BJ (cell line): ENCODE measurements at regions of chr2 and their contacts with region 1.

Region 1: GRCh38 chr2:216139884-216140283 is 30.7 kb downstream of the XRCC5 start:
- DNase-seq: no peak
- H3K4me3 ChIP-seq: no peak overlapping the region
- H3K27me3 ChIP-seq: no peaks in the 10 kb centered on the region
- CTCF ChIP-seq: peak; percentile 24; the same call in 1 of the 2 replicates

Region 2: DNA sequence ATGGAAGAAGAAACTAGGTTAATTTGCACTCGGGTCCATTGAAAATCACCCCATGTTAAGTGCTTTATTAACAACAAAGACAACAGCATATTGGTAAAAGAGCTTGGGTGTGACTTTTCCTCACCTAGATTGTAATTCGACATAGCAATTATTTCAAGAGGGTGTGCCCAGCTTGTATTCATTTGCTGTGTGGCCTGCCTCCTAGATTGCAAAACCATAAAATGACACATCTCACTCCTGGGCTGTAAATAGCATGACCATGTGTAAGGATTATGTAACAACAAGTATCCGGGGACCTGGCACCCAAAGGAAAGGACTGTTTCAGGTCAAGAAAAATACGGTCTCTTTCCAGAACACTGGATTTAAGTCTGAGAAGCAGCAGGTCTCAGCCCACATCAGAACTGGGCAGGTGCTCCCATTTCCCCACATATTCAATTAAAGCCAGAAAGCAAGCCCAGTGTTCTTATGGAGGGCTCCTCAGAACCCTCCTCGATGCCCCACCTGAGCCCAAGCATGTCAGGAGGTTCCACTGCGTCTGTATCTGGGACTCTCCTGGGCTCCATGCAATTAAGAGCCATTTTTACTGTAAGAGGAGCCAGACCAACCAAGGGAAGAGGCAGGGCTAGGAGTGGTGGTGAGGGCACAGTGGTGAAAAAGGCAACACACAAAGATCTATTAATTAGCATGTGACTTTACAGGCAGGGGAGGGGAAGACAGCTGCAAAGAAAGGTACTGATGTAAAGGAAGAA is 165.8 kb before region 1 on chr2:
- CTCF ChIA-PET with region 1: no interaction called
- POLR2A ChIA-PET with region 1: no interaction called
- DNase-seq: no peak
- H3K4me3 ChIP-seq: no peak overlapping the region
- H3K27me3 ChIP-seq: no peaks in the 10 kb centered on the region
- CTCF ChIP-seq: no peak

Region 3: GRCh38 chr2:216303010-216303676 is 163.3 kb after region 1 on chr2:
- CTCF ChIA-PET with region 1: no interaction called
- POLR2A ChIA-PET with region 1: interaction called, 12 read pairs
- DNase-seq: peak; percentile 72
- H3K4me3 ChIP-seq: no peak overlapping the region
- H3K27me3 ChIP-seq: no peaks in the 10 kb centered on the region
- CTCF ChIP-seq: no peak

Region 4: GRCh38 chr2:217978536-217979165 is 1838.8 kb after region 1 on chr2:
- CTCF ChIA-PET with region 1: no interaction called
- POLR2A ChIA-PET with region 1: no interaction called
- DNase-seq: no peak
- H3K4me3 ChIP-seq: no peak overlapping the region
- H3K27me3 ChIP-seq: no peaks in the 10 kb centered on the region
- CTCF ChIP-seq: no peak